GM12878 (cell line): ENCODE measurements at regions of chr1 and their contacts with region 1.

Region 1: GRCh38 chr1:89681045-89681729 is 48.3 kb downstream of the LRRC8C start:
- DNase-seq: peak; percentile 57
- ATAC-seq: peak; percentile 91
- H3K4me3 ChIP-seq: no peak overlapping the region
- H3K27ac ChIP-seq: peak overlapping the region; percentile 49
- H3K4me1 ChIP-seq: peaks cover 5% of the 10 kb centered on the region; the same call in 1 of the 2 replicates
- H3K27me3 ChIP-seq: no peaks in the 10 kb centered on the region
- CTCF ChIP-seq: no peak
- EP300 ChIP-seq: peak; percentile 62 to 96; a peak in 3 of 4 replicates
- POLR2A ChIP-seq: no peak
- RAD21 ChIP-seq: no peak

Region 2: DNA sequence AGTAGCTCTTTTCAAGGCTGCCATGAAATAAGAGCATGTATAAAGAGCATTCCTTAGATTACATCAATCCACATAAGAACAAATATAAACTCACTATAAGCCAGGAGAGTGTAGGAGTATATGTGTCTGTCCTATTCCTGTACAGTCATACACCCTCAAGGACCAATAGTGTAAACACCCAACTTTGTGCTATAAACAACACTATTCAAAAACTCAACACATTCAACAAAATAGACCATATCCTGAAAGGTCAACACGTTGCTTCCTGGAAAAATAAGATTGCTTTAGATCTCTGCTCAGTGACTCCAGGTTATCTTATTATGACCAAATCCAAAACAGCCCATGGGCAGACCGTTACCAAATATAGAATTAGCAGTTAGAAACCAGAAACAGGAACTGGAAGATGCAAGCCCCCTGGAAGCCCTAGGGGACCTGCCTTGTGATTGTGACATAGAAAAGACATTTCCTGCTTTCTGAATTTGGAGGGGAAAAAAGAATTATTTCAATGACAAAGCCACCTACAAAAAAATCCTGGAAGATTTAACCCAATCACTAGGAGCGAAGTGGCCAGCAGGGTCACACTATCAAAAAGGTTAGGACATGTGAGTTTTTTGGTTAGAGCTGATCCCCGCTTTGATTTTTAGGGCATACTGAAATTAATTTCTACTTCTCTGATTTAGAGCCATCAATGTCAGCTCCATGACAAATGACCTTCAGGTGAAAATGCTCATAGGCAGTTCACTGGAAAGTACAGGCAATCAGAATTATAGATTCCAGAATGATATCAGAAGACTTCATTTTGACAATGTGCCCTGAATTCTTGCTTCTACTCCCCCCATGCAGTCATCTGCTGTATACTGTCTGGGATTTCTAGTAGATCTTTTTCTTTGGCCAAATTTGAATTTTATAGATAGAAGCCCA is 11.7 kb after region 1 on chr1:
- CTCF ChIA-PET with region 1: interaction called, 5 read pairs
- POLR2A ChIA-PET with region 1: interaction called, 4 read pairs
- RAD21 ChIA-PET with region 1: interaction called, 9 read pairs
- SMC1A ChIA-PET with region 1: interaction called, 70 read pairs
- in situ Hi-C with region 1: no loop called
- intact Hi-C with region 1: no loop called
- DNase-seq: peak; percentile 52
- ATAC-seq: peak; percentile 83
- H3K4me3 ChIP-seq: peak overlapping the region; percentile 55; the same call in 1 of the 2 replicates
- H3K27ac ChIP-seq: peak overlapping the region; percentile 86
- H3K4me1 ChIP-seq: peaks cover 24% of the 10 kb centered on the region
- H3K27me3 ChIP-seq: no peaks in the 10 kb centered on the region
- CTCF ChIP-seq: no peak
- EP300 ChIP-seq: peak; percentile 89 to 91
- POLR2A ChIP-seq: no peak
- RAD21 ChIP-seq: no peak

Region 3: GRCh38 chr1:89698624-89699023 is 17.4 kb after region 1 on chr1:
- CTCF ChIA-PET with region 1: interaction called, 5 read pairs
- POLR2A ChIA-PET with region 1: interaction called, 4 read pairs
- RAD21 ChIA-PET with region 1: interaction called, 3 read pairs
- SMC1A ChIA-PET with region 1: interaction called, 70 read pairs
- in situ Hi-C with region 1: no loop called
- intact Hi-C with region 1: no loop called
- DNase-seq: no peak
- ATAC-seq: no peak
- H3K4me3 ChIP-seq: no peak overlapping the region
- H3K27ac ChIP-seq: no peak overlapping the region; the same call in 1 of the 2 replicates
- H3K4me1 ChIP-seq: peaks cover 22% of the 10 kb centered on the region
- H3K27me3 ChIP-seq: no peaks in the 10 kb centered on the region
- CTCF ChIP-seq: no peak
- EP300 ChIP-seq: no peak
- POLR2A ChIP-seq: no peak
- RAD21 ChIP-seq: no peak

Region 4: GRCh38 chr1:89890085-89890752 is 209.0 kb after region 1 on chr1:
- CTCF ChIA-PET with region 1: no interaction called
- POLR2A ChIA-PET with region 1: no interaction called
- RAD21 ChIA-PET with region 1: no interaction called
- SMC1A ChIA-PET with region 1: no interaction called
- in situ Hi-C with region 1: no loop called
- intact Hi-C with region 1: no loop called
- DNase-seq: no peak
- ATAC-seq: no peak
- H3K4me3 ChIP-seq: no peak overlapping the region
- H3K27ac ChIP-seq: no peak overlapping the region
- H3K4me1 ChIP-seq: no peaks in the 10 kb centered on the region
- H3K27me3 ChIP-seq: no peaks in the 10 kb centered on the region
- CTCF ChIP-seq: no peak
- EP300 ChIP-seq: no peak
- POLR2A ChIP-seq: no peak
- RAD21 ChIP-seq: no peak